ENCODE measurements at regions of chr22 and their contacts with region 1.

Region 1: DNA sequence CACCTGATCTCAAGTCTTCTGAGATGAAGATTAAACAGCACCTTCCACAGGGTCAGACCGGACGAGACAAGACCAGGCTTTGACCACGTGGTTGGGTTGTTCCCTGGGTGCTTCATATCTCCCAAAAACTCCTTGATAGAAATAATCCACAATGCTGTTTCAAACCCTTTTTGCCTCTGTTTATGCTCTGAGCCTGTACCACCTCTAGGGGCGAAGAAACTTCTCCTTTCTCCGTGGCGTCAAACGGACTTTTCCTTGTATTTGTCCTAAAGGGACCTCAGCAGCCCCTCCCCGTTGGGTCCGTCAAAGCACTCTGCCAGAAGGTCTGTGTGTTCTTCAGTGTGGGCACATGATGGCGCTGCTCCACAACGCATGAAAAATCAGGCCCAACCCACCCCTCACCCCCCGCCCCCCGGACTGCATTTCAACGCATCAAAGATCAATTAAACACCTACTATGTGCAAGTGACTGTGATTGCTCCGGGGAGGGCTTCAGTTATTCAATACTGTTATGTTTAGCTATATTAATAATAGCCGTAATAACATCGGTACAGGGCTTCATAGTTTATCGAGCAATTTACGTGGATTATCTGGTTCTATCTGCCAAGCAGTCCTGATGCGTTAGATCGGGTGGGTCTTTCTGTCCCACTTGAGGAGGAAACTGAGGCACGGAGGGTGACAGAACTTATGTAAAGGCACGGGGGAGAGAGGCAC is 17.3 kb upstream of the EIF3D start:
- DNase-seq: peak in 4 of 6 donors; percentile 31 to 53 (median 42)
- ATAC-seq: peak; percentile 78 to 96 (median 90)
- H3K4me3 ChIP-seq: no peak overlapping the region
- H3K27ac ChIP-seq: no peak overlapping the region
- H3K4me1 ChIP-seq: peaks cover 0 to 3% (median 0%) of the 10 kb centered on the region in 3 donors
- H3K27me3 ChIP-seq: no peaks in the 10 kb centered on the region
- CTCF ChIP-seq: peak; percentile 8 to 42 (median 38)

Region 2: GRCh38 chr22:36481393-36482168 is 64.7 kb before region 1 on chr22 and contains the start of gene TXN2:
- intact Hi-C with region 1: no loop called
- DNase-seq: peak; percentile 93 to 98 (median 96)
- ATAC-seq: peak; percentile 90 to 96 (median 93)
- H3K4me3 ChIP-seq: peak within 1 kb of the TSS; percentile 50 to 91 (median 77)
- H3K27ac ChIP-seq: peak within 1 kb of the TSS; percentile 97 to 99 (median 99)
- H3K4me1 ChIP-seq: peaks cover 4 to 11% (median 4%) of the 10 kb centered on the region in 3 donors
- H3K27me3 ChIP-seq: no peaks in the 10 kb centered on the region
- CTCF ChIP-seq: no peak
- total RNA-seq, gene TXN2: 20.4 to 33.6 (median 30.5) TPM

Region 3: GRCh38 chr22:36762687-36763260 is 216.5 kb after region 1 on chr22:
- intact Hi-C with region 1: loop called in 2 of 3 experiments (anchors 10 kb)
- DNase-seq: peak in 1 of 6 donors; percentile 49
- ATAC-seq: no peak
- H3K4me3 ChIP-seq: no peak overlapping the region
- H3K27ac ChIP-seq: no peak overlapping the region
- H3K4me1 ChIP-seq: peaks cover 0 to 6% (median 5%) of the 10 kb centered on the region in 3 donors
- H3K27me3 ChIP-seq: no peaks in the 10 kb centered on the region
- CTCF ChIP-seq: no peak

Region 4: DNA sequence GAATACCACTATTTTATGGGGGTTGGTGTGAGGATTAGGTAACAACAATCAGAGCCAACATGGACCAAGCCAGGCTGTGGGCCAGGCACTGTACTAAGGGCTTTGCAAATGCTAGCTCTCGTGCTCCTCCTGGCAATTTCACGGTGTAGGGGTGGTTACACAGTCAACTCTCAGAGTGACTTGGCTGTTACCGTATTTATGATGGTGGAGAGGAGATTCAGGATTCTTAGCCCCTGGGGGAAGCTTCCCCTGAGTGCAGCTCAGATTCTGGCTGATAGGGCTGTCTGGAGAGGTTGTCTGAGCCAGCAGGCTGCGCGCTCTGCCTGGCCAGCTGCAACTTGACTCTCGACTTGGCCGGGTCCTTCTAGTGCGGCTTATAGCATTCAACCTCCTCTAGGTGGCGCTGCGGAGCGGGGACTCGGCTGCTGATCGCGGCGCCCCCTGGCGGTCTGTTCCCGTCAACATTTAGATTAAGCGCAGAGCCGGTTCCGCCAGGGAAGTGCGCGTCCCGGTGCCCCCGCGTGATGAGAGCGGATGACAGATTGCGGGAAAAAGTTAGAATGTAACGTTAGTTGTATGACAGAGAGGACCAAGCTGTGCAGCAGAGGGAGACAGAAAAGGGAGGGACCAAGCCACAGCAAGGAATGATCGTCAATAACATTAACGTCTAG is 310.0 kb after region 1 on chr22:
- intact Hi-C with region 1: loop called in 2 of 3 experiments (anchors 5 kb)
- DNase-seq: peak; percentile 79 to 99 (median 92)
- ATAC-seq: peak; percentile 91 to 97 (median 96)
- H3K4me3 ChIP-seq: no peak overlapping the region
- H3K27ac ChIP-seq: no peak overlapping the region
- H3K4me1 ChIP-seq: no peaks in the 10 kb centered on the region
- H3K27me3 ChIP-seq: no peaks in the 10 kb centered on the region
- CTCF ChIP-seq: peak; percentile 100

Measured in pancreas (tissue), 10 donors.